Activated CD4-positive, alpha-beta T cell treated with anti-CD3 and anti-CD28 coated beads for 36 hours (primary cell): ENCODE measurements at regions of chr21 and their contacts with region 1.

Region 1: DNA sequence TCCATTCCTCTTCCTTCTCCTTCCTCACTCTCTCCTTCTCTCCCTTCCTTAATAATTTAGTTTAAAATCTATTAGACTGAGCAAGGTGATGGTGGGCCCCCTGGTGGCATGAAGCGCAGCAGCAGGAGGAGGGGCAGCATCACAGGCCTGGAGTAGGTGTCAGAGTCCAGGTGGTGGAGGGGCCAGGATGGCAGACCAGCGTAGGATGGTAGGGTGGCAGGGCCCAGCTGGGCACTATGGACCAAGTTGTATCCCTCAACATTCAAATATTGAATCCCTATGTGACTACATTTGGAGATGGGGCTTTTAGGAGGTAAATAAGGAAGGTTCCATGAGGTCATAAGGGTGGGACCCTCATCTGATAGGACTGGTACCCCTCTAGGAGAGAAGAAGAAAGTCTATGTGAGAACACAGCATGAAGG is 61.0 kb downstream of the WDR4 start:
- DNase-seq: peak; percentile 82
- ATAC-seq: peak; percentile 89
- H3K4me3 Mint-ChIP-seq: no peak overlapping the region
- H3K27ac Mint-ChIP-seq: no peak overlapping the region
- H3K4me1 Mint-ChIP-seq: no peaks in the 10 kb centered on the region
- H3K27me3 Mint-ChIP-seq: no peaks in the 10 kb centered on the region

Region 2: DNA sequence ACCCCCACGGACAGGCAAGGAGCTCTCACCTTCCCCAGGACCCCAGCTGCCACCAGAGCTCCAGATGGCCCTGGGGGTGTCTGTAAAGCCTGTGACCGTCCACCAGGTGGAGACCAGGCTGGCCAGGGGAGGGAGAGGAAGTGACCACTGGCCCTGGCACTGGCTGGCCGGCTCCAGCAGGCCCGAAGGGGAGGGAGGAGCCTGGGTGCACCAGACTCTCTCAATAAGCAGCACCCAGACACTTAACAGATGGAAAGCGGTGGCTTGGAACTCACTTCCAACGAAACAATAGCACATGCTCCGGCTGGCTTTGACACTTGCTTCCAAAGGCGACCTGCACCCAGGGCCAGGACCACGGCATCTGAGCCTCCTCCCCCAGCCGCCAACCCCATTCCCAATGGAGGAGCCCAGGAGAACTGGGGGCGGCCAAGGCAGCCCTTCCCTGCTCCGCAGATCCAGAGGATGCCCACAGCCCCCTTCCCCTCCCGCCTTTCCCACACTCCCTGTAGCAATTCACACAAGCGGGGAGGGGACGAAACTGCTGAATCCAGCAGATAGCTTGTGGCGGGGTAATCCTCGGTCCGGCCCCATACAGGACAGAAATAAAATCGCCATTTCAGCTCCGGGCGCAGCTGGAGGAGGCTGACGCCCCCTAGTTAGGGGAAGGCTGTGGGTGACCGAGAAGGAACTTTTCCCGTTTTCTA is 165.7 kb before region 1 on chr21:
- CTCF ChIA-PET with region 1: no interaction called
- POLR2A ChIA-PET with region 1: no interaction called
- intact Hi-C with region 1: loop called in 1 of 2 experiments (anchors 2 kb)
- DNase-seq: no peak
- ATAC-seq: no peak
- H3K4me3 Mint-ChIP-seq: peak overlapping the region; percentile 68
- H3K27ac Mint-ChIP-seq: peak overlapping the region; percentile 39
- H3K4me1 Mint-ChIP-seq: peaks cover 17% of the 10 kb centered on the region
- H3K27me3 Mint-ChIP-seq: peaks cover 3% of the 10 kb centered on the region

Region 3: GRCh38 chr21:42705746-42706374 is 112.5 kb before region 1 on chr21:
- CTCF ChIA-PET with region 1: no interaction called
- POLR2A ChIA-PET with region 1: no interaction called
- intact Hi-C with region 1: no loop called
- DNase-seq: no peak
- ATAC-seq: no peak
- H3K4me3 Mint-ChIP-seq: no peak overlapping the region
- H3K27ac Mint-ChIP-seq: no peak overlapping the region
- H3K4me1 Mint-ChIP-seq: no peaks in the 10 kb centered on the region
- H3K27me3 Mint-ChIP-seq: no peaks in the 10 kb centered on the region

Region 4: GRCh38 chr21:42737951-42738590 is 80.3 kb before region 1 on chr21:
- CTCF ChIA-PET with region 1: no interaction called
- POLR2A ChIA-PET with region 1: interaction called, 3 read pairs
- intact Hi-C with region 1: loop called in 1 of 2 experiments (anchors 5 kb)
- DNase-seq: peak; percentile 53
- ATAC-seq: peak; percentile 90
- H3K4me3 Mint-ChIP-seq: no peak overlapping the region
- H3K27ac Mint-ChIP-seq: peak overlapping the region; percentile 96
- H3K4me1 Mint-ChIP-seq: peaks cover 37% of the 10 kb centered on the region
- H3K27me3 Mint-ChIP-seq: no peaks in the 10 kb centered on the region